PC-3 (cell line): ENCODE measurements at regions of chr7 and their contacts with region 1.

Region 1: GRCh38 chr7:55552320-55553023 is 19.8 kb downstream of the VOPP1 start:
- DNase-seq: peak; percentile 86
- ATAC-seq: peak; percentile 85
- H3K4me3 ChIP-seq: peak overlapping the region; percentile 47
- H3K27ac ChIP-seq: peak overlapping the region; percentile 59
- H3K4me1 ChIP-seq: peaks cover 68% of the 10 kb centered on the region
- H3K27me3 ChIP-seq: no peaks in the 10 kb centered on the region
- CTCF ChIP-seq: no peak

Region 2: GRCh38 chr7:55432939-55433784 is 119.3 kb before region 1 on chr7:
- CTCF ChIA-PET with region 1: no interaction called
- POLR2A ChIA-PET with region 1: no interaction called
- intact Hi-C with region 1: loop called (anchors 1 kb)
- DNase-seq: peak; percentile 66
- ATAC-seq: peak; percentile 89
- H3K4me3 ChIP-seq: no peak overlapping the region
- H3K27ac ChIP-seq: no peak overlapping the region
- H3K4me1 ChIP-seq: peaks cover under 1% of the 10 kb centered on the region; the same call in 1 of the 2 replicates
- H3K27me3 ChIP-seq: no peaks in the 10 kb centered on the region
- CTCF ChIP-seq: peak; percentile 75

Region 3: DNA sequence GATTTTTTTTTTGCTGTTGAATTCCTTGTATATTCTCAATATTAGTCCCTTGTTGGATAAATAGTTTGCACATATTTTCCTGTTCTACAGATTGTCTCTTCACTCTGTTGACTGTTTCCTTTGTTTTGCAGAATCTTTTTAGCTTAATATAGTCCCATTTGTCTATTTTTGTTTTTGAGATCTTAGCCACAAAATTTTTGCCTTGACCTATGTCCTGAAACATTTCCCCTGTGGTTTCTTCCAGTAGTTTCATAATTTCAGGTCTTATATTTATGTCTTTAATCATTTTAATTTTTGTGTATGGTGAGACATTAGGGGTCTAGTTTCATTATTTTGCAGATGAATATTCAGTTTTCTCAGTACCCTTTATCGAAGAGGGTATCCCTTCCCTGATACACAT is 94.7 kb before region 1 on chr7:
- CTCF ChIA-PET with region 1: no interaction called
- POLR2A ChIA-PET with region 1: no interaction called
- intact Hi-C with region 1: loop called (anchors 5 kb)
- DNase-seq: no peak
- ATAC-seq: no peak
- H3K4me3 ChIP-seq: no peak overlapping the region
- H3K27ac ChIP-seq: no peak overlapping the region
- H3K4me1 ChIP-seq: peaks cover 13% of the 10 kb centered on the region; the same call in 1 of the 2 replicates
- H3K27me3 ChIP-seq: no peaks in the 10 kb centered on the region
- CTCF ChIP-seq: no peak

Region 4: GRCh38 chr7:55509322-55509721 is 43.1 kb before region 1 on chr7:
- CTCF ChIA-PET with region 1: no interaction called
- POLR2A ChIA-PET with region 1: no interaction called
- intact Hi-C with region 1: no loop called
- DNase-seq: no peak
- ATAC-seq: no peak
- H3K4me3 ChIP-seq: no peak overlapping the region
- H3K27ac ChIP-seq: no peak overlapping the region
- H3K4me1 ChIP-seq: peaks cover 8% of the 10 kb centered on the region; the same call in 1 of the 2 replicates
- H3K27me3 ChIP-seq: no peaks in the 10 kb centered on the region
- CTCF ChIP-seq: no peak

Region 5: DNA sequence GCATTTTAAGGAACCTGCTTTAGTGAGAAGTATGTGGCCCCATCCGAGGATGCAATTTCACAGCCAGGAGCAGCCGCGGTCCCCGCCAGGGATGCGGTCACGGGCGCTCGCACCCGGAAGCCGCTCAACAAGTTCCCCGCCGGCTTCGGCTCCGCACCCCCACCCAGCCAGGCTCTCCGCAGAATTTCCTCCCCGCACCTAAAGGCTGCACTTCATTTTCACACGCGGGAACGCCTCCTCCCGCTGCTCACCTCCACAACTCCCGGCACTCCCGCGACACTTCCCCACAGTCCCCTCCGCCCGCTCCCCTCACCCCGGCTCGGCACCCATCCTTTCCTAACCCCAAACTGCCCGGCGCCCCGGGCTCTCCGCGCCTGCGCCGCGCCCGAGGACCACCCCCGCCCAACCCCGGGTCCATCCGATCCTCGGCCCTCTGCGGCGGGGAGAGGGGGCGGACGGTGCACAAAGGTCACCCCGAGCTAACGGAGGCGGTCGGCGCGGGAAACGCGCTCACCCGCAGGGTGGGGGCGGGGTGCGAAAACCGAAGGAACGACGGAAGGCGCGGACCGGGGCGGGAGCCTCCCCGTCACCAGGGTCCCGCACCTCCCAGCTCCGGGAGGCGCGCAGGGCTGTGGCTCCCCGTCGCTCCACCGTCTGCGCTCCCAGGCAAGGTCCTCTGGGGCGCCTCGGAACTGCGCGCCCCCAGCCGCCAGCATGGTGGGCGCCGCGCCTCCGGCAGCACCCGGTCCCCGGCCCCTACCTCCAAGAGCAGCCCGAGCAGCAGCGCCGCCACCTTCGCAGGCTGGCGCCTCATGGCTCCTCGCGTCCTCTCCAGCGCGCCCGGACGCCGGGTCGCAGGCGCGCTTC is 19.3 kb after region 1 on chr7:
- CTCF ChIA-PET with region 1: no interaction called
- POLR2A ChIA-PET with region 1: no interaction called
- intact Hi-C with region 1: loop called (anchors 1 kb)
- DNase-seq: peak; percentile 38
- ATAC-seq: peak; percentile 40
- H3K4me3 ChIP-seq: peak overlapping the region; percentile 81
- H3K27ac ChIP-seq: peak overlapping the region; percentile 71
- H3K4me1 ChIP-seq: peaks cover 25% of the 10 kb centered on the region
- H3K27me3 ChIP-seq: no peaks in the 10 kb centered on the region
- CTCF ChIP-seq: no peak

Region 6: GRCh38 chr7:55593515-55594318 is 41.2 kb after region 1 on chr7:
- CTCF ChIA-PET with region 1: no interaction called
- POLR2A ChIA-PET with region 1: no interaction called
- intact Hi-C with region 1: loop called (anchors 1 kb)
- DNase-seq: peak; percentile 79
- ATAC-seq: peak; percentile 89
- H3K4me3 ChIP-seq: no peak overlapping the region
- H3K27ac ChIP-seq: no peak overlapping the region
- H3K4me1 ChIP-seq: no peaks in the 10 kb centered on the region
- H3K27me3 ChIP-seq: no peaks in the 10 kb centered on the region
- CTCF ChIP-seq: peak; percentile 86